ENCODE measurements at regions of chr22 and their contacts with region 1.

Region 1: DNA sequence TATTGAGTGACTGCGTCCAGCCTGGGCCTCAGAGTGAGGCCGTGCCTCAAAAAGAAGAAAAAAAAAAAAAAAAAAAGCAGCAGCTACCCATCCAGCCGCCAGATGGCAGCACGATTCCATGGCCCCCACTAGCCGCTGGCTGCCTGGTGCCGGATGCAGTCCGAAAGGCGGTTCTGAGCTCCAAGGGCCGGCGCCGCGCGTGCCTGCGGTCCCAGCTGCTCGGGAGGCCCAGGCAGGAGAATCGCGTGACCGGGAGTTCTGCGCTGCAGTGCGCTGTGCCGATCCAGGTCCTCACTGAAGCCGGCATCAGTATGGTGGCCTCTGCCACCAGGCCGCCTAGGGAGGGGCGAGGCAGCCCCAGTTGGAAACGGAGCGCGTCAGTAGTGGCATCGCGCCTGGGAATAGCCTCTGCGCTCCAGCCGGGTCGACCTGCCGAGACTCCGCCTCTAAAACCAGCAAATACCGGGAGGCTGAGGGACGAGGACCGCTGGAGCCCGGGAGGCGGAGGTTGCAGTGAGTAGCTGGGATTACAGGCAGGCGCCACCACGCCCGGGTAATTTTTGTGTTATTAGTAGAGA is 19.3 kb downstream of the SCARF2 start:
- DNase-seq: peak; percentile 86
- ATAC-seq: peak; percentile 80
- H3K4me3 ChIP-seq: peak overlapping the region in 3 of 5 experiments; percentile 37 to 50 (median 45)
- H3K4me3 Mint-ChIP-seq: peak overlapping the region; percentile 77
- H3K27ac ChIP-seq: no peak overlapping the region
- H3K27ac Mint-ChIP-seq: no peak overlapping the region
- H3K4me1 ChIP-seq: peaks cover 0 to 5% of the 10 kb centered on the region in 2 donors
- H3K4me1 Mint-ChIP-seq: peaks cover 4% of the 10 kb centered on the region
- H3K27me3 ChIP-seq: peaks cover 0 to 5% (median 2%) of the 10 kb centered on the region in 4 experiments
- H3K27me3 Mint-ChIP-seq: peaks cover under 1% of the 10 kb centered on the region
- CTCF ChIP-seq: peak; percentile 86

Region 2: DNA sequence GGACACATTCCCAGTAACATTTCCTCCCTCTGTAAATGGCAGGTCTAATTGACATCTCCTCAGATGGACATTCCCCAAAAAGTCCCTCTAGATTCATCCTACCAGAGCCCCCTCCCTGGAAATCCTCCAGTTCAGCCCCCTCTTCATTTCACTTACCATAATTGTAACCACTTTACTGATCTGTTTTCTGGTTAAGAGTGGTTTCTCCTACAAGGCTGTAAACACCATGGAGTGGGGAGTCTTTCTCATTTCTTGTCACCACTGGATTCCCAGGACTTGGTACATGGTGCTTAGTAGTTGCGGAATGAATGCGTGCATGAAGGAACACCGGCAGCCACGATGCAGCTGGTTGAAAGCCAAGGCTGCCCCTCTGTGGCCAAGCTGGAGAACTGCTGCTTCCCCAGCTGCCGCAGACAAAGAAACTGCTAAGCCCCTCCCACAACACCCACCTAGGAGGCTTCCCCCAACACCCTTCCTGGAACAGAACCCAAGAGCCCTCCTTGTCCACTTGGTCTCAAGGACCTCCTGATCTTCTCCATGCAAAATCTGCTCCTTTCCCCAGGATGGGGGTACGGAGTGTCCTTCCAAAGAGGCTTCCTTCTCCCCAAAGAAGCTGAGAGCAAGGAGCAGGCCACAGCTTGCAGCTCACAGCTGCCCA is 37.9 kb after region 1 on chr22:
- CTCF ChIA-PET with region 1: interaction called, 96 read pairs
- POLR2A ChIA-PET with region 1: interaction called, 5 read pairs
- intact Hi-C with region 1: loop called (anchors 1 kb)
- DNase-seq: peak; percentile 84
- ATAC-seq: peak; percentile 100
- H3K4me3 ChIP-seq: no peak overlapping the region
- H3K4me3 Mint-ChIP-seq: no peak overlapping the region
- H3K27ac ChIP-seq: no peak overlapping the region
- H3K27ac Mint-ChIP-seq: peak overlapping the region; percentile 59
- H3K4me1 ChIP-seq: peaks cover 10% of the 10 kb centered on the region in 2 donors
- H3K4me1 Mint-ChIP-seq: peaks cover 22% of the 10 kb centered on the region
- H3K27me3 ChIP-seq: no peaks in the 10 kb centered on the region
- H3K27me3 Mint-ChIP-seq: no peaks in the 10 kb centered on the region
- CTCF ChIP-seq: peak; percentile 85

Region 3: DNA sequence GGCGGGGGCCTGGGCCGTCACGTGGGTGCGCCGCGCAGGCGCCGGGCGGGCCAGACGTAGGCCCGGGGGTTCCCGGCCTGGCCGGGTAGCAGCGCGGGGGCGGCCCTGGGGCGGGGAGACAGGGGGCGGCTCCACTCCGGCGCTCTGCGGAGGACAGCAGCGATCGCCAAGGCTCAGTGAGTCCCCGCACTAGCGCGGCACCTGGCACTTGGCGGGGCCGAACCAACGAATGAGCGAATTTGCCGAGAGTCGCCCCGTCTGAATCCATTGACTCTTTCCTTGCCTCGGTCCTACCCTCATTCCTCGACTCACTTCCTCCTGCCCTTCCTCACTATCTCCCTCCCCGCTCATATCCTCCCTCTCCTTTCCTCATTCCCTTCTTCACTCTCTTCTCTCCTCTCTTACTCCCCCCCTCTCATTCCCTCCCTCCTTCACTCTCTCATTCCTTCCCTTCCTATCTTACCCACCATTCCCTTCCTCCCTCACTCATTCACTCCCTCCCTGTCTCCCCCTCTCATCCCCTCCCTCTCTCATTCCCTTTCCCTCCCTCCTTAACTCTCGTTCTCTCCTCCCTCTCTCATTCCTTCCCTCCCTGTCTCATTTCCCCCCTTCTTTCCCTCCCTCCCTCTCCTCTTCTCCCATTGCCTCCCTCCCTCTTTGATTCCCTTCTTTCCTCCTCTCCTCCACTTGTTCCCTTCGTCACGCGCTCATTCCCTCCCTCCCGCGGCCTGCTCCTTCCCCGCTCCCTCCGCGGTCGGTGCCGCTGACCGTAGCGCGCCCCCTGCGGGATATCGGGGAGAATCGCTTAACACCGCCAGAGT is 77.8 kb after region 1 on chr22:
- CTCF ChIA-PET with region 1: interaction called, 15 read pairs
- POLR2A ChIA-PET with region 1: no interaction called
- intact Hi-C with region 1: loop called (anchors 1 kb)
- DNase-seq: peak; percentile 96
- ATAC-seq: peak; percentile 96
- H3K4me3 ChIP-seq: peak overlapping the region; percentile 75 to 85 (median 76)
- H3K4me3 Mint-ChIP-seq: peak overlapping the region; percentile 97
- H3K27ac ChIP-seq: peak overlapping the region; percentile 96 to 98
- H3K27ac Mint-ChIP-seq: peak overlapping the region; percentile 95
- H3K4me1 ChIP-seq: peaks cover 10 to 23% of the 10 kb centered on the region in 2 donors
- H3K4me1 Mint-ChIP-seq: peaks cover 26% of the 10 kb centered on the region
- H3K27me3 ChIP-seq: no peaks in the 10 kb centered on the region
- H3K27me3 Mint-ChIP-seq: no peaks in the 10 kb centered on the region
- CTCF ChIP-seq: peak; percentile 91

Region 4: DNA sequence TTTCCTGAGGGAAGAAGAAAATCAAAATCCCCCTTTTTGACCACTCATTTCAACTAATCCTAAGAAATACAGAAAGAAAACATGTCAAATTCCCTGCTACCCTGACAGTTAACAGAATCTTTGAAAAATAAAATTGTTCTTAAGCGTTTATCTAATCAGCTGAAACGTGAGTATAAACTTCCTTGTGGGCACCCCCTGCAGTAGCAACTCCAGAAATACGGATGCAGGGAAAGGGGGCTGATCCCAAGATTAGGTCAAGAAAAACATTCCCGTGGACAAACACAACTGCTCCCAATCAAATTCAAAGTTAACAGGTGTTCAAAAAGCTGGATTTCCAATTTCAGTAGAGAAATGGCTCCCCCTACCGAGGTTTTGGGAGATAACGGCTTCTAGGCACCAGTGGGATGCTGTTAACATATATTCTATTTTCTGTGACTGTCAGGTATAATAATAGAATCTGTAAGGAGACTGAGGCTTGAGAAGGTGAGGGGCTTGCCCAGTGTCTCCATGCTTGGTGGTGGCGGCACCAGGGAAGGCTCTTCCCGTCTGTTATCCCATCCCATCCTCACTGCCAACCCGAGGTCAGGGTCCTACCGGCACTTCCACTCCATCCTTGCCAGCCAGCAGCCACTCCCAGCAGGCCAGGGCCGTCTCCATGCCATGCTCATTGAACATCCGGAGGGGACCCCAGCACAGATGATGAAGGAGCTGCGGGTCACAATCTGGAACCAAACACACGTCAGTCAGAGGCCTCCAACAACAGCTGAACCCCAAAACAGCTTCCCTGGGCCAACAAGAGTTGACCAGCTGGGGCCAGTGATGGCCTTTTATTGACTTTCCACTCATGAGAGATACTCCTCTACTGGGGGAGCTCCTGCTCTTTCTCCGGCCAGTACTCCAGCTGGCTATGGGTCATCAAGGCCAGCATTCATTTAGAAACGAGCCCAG is 323.6 kb after region 1 on chr22:
- CTCF ChIA-PET with region 1: interaction called, 11 read pairs
- POLR2A ChIA-PET with region 1: interaction called, 5 read pairs
- intact Hi-C with region 1: no loop called
- DNase-seq: peak; percentile 57
- ATAC-seq: no peak
- H3K4me3 ChIP-seq: no peak overlapping the region
- H3K4me3 Mint-ChIP-seq: no peak overlapping the region
- H3K27ac ChIP-seq: no peak overlapping the region
- H3K27ac Mint-ChIP-seq: no peak overlapping the region
- H3K4me1 ChIP-seq: peaks cover 0 to 4% of the 10 kb centered on the region in 2 donors
- H3K4me1 Mint-ChIP-seq: peaks cover 14% of the 10 kb centered on the region
- H3K27me3 ChIP-seq: no peaks in the 10 kb centered on the region
- H3K27me3 Mint-ChIP-seq: no peaks in the 10 kb centered on the region
- CTCF ChIP-seq: peak; percentile 79

Measured in B cell (primary cell).